ENCODE measurements at regions of chr14 and their contacts with region 1.

Region 1: GRCh38 chr14:68911594-68912227 is 67.4 kb downstream of the ACTN1 start:
- DNase-seq: peak; percentile 86
- ATAC-seq: peak; percentile 89
- H3K4me3 Mint-ChIP-seq: no peak overlapping the region
- H3K27ac Mint-ChIP-seq: peak overlapping the region; percentile 81
- H3K4me1 Mint-ChIP-seq: peaks cover 51% of the 10 kb centered on the region
- H3K27me3 Mint-ChIP-seq: no peaks in the 10 kb centered on the region
- CTCF ChIP-seq: peak; percentile 99

Region 2: DNA sequence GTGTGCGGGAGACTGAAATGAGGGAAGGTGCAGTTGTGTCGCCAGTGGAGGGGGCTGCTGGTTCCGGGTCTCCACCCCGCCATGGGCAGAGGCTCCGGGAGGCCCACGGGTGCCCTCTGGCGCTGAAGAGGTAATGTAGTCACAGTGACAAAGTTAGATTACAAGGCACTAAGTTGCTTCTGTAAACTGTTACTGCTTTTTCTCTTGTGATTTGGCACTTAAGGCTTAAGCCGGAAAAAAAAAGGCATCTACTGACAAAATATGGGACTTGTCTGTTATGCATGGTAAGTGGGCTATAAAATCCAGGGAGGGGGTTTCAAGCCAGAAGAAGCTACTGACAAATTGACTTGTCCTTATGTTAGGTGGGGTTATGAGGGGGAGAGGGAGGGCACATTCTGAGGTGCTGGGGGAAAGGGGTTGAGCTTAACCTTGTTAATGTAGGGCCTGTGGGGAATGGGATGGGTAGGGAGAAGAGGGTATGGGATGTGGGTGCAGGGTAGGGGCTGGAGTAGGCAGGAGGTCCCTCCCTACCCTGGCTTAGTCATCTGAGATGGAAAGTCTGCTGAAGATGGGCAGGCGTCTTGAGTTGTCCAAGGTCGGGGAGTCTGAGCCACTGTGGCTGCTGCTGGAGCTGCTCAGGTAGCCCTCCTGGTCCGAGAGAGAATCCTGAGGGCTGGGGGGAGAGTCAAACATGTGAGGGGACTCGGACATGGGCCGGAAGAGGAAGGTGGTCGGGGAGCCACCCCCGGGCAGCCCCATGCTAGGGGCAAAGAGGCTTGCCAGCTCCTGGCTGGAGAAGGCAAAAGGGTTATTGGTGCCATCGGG is 122.5 kb before region 1 on chr14:
- CTCF ChIA-PET with region 1: no interaction called
- POLR2A ChIA-PET with region 1: no interaction called
- intact Hi-C with region 1: no loop called
- DNase-seq: peak; percentile 94
- ATAC-seq: peak; percentile 40
- H3K4me3 Mint-ChIP-seq: peak overlapping the region; percentile 88
- H3K27ac Mint-ChIP-seq: peak overlapping the region; percentile 100
- H3K4me1 Mint-ChIP-seq: peaks cover 53% of the 10 kb centered on the region
- H3K27me3 Mint-ChIP-seq: no peaks in the 10 kb centered on the region
- CTCF ChIP-seq: peak; percentile 82

Region 3: DNA sequence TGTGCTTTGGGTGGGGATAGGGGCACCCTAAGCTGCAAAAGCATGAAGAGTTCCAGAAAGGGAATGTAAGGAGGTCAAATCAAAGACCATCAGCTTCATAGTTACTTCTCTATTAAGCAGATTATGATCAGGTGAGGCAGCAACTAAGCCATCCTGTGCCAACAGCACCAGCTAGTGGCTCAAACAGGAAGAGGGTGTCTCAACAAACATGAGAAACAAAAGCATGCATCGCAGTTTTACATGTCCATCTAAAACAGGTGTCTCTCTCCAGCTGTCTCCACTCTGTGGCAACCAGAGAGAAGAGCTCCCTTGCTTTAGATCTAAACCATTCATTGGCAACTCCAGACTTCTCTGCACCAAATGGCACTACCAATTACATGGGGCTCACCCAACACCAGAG is 14.5 kb after region 1 on chr14:
- CTCF ChIA-PET with region 1: interaction called, 87 read pairs
- POLR2A ChIA-PET with region 1: interaction called, 5 read pairs
- intact Hi-C with region 1: no loop called
- DNase-seq: peak; percentile 61
- ATAC-seq: no peak
- H3K4me3 Mint-ChIP-seq: no peak overlapping the region
- H3K27ac Mint-ChIP-seq: peak overlapping the region; percentile 50
- H3K4me1 Mint-ChIP-seq: peaks cover 76% of the 10 kb centered on the region
- H3K27me3 Mint-ChIP-seq: no peaks in the 10 kb centered on the region
- CTCF ChIP-seq: peak; percentile 60

Region 4: GRCh38 chr14:68979021-68979782 is 67.5 kb after region 1 on chr14 and contains the start of gene ACTN1:
- CTCF ChIA-PET with region 1: interaction called, 19 read pairs
- POLR2A ChIA-PET with region 1: interaction called, 3 read pairs
- intact Hi-C with region 1: loop called (anchors 5 kb)
- DNase-seq: peak; percentile 87
- ATAC-seq: peak; percentile 61
- H3K4me3 Mint-ChIP-seq: peak within 1 kb of the TSS; percentile 83
- H3K27ac Mint-ChIP-seq: peak within 1 kb of the TSS; percentile 96
- H3K4me1 Mint-ChIP-seq: peaks cover 53% of the 10 kb centered on the region
- H3K27me3 Mint-ChIP-seq: no peaks in the 10 kb centered on the region
- CTCF ChIP-seq: no peak
- total RNA-seq, gene ACTN1: 214 TPM

Region 5: GRCh38 chr14:69001381-69001780 is 89.7 kb after region 1 on chr14:
- CTCF ChIA-PET with region 1: interaction called, 13 read pairs
- POLR2A ChIA-PET with region 1: interaction called, 3 read pairs
- intact Hi-C with region 1: no loop called
- DNase-seq: no peak
- ATAC-seq: no peak
- H3K4me3 Mint-ChIP-seq: no peak overlapping the region
- H3K27ac Mint-ChIP-seq: no peak overlapping the region
- H3K4me1 Mint-ChIP-seq: no peaks in the 10 kb centered on the region
- H3K27me3 Mint-ChIP-seq: peaks cover 2% of the 10 kb centered on the region
- CTCF ChIP-seq: no peak

Region 6: DNA sequence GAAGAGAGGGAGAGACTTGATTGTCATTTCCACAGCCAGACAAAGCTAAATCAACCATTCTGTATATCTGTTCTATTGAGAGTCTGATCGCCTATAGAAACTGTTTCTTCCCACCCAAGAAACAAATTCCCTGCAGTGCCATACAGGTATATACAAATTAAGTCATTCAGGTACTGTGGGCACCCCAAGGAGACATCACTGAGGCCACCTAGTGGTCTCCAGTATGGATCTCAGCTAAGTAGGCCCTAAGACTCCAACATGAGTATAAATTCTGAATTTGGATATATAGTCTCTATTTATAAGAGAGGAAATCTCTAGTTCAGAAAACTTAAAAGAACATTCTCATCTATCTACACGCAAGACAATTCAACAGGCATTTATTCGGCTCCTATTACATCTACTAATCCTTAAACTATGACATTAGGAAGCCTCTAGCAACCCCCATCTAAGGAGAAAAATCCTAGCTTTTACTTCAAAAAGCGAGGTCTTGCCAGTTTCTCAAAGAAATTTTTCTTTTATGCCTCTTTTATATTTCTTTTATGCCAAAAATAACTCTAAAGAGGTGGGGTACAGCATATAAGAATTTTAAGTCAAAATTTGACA is 178.6 kb after region 1 on chr14:
- CTCF ChIA-PET with region 1: interaction called, 59 read pairs
- POLR2A ChIA-PET with region 1: no interaction called
- intact Hi-C with region 1: loop called (anchors 5 kb)
- DNase-seq: peak; percentile 51
- ATAC-seq: peak; percentile 74
- H3K4me3 Mint-ChIP-seq: no peak overlapping the region
- H3K27ac Mint-ChIP-seq: no peak overlapping the region
- H3K4me1 Mint-ChIP-seq: peaks cover 24% of the 10 kb centered on the region
- H3K27me3 Mint-ChIP-seq: no peaks in the 10 kb centered on the region
- CTCF ChIP-seq: peak; percentile 78

Region 7: GRCh38 chr14:69818757-69819191 is 907.1 kb after region 1 on chr14:
- CTCF ChIA-PET with region 1: no interaction called
- POLR2A ChIA-PET with region 1: no interaction called
- intact Hi-C with region 1: no loop called
- DNase-seq: peak; percentile 61
- ATAC-seq: peak; percentile 88
- H3K4me3 Mint-ChIP-seq: no peak overlapping the region
- H3K27ac Mint-ChIP-seq: no peak overlapping the region
- H3K4me1 Mint-ChIP-seq: no peaks in the 10 kb centered on the region
- H3K27me3 Mint-ChIP-seq: peaks cover 2% of the 10 kb centered on the region
- CTCF ChIP-seq: peak; percentile 67

Measured in activated CD8-positive, alpha-beta T cell treated with anti-CD3 and anti-CD28 coated beads for 36 hours (primary cell).